Heart right ventricle (tissue), 16 donors: ENCODE measurements at regions of chr20 and their contacts with region 1.

Region 1: DNA sequence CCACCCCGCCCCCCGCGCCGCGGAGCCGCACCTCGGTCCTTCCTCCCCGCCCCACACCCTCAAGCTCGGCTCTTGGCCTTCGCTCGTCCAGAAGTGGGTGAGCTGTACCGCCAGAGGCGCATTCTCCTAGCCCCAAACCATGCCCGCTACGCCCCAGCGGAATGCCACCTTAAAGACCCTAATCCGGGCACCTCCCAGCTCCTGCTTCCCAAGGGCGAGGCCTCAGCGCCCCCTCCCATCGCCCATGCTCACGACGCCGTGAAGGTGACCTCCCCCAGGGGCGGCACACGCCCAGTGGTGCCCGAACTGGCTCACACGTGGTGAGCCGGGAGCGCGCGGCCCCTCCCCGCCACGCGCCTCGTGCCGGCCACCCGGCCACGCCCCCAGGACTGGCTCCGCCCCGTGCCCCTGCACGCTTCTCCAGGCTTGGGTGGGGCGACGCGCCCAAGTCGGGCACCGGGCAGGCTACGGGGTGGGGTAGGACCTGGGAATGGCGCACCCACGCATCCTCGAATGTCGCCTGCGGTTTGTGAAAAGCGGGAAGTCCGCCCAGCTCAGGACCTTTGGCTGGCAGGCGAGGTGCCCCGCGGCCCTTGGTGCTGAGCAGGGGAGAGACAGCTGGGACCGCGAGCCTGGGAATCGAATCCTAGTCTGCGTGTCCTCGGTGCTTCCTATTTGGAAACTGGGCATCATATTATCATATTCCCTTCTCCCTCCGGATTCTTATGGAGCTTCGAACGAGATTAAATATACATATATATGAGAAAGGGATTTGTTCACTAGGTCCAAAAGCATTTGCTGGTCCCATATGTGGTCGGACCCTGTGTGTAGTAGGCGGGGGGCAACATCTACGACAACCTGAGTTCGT is 941 bp upstream of the SOX12 start:
- DNase-seq: peak; percentile 88 to 92
- ATAC-seq: peak; percentile 65 to 87 (median 78)
- H3K4me3 ChIP-seq: peak overlapping the region; percentile 33 to 83 (median 73)
- H3K27ac ChIP-seq: peak overlapping the region; percentile 85 to 98 (median 95)
- H3K4me1 ChIP-seq: peaks cover 5 to 44% (median 24%) of the 10 kb centered on the region in 9 donors
- H3K27me3 ChIP-seq: peaks cover 0 to 9% (median 0%) of the 10 kb centered on the region in 7 donors
- CTCF ChIP-seq: peak in 5 of 9 donors; percentile 24 to 45 (median 40)

Region 2: DNA sequence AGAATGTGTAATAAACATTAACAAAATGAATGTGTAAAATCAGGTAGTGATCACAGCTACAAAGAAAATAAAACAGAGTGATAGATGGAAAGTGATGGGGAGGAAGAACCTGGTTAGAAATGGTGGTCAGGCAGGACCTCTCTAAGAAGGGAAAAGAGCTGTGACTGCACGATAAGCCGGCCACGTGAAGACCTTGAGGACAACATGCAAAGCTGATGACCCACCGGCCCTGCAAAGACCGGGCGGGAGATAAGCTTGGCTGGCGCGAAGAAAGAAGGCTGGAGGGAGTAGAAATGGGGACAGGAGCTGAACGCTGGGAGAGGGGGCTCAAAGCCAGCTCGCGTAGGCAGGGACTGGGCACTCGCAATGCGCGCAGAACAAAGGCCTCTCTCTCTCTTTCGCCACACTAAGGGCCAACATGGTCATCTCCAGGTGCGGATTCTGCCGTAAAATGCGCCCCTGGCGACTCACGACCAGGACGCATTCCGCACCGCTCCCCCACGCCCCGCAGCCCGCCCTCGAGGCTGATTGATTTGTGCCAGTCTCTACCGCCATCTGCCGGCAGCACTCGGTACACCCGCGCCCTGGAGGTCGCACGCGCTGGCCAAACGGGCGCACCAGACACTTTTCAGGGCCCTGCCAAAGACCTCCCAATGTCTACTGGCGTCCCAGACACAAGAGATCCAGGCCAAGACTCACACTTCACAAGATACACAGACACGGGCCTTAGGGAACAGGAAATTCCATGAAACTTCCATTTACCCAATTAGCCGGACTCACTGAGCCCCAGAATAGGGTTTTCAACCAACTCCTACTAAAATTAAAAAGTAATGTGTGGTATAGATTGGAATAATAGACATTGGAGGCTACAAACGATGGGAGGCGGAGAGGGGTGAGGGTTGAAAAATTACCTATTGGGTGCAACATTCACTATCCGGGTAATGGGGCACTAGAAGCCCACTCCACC is 57.5 kb before region 1 on chr20:
- intact Hi-C with region 1: loop called in 2 of 10 experiments (anchors 5 to 10 kb)
- DNase-seq: peak; percentile 85 to 87
- ATAC-seq: peak; percentile 87 to 94 (median 94)
- H3K4me3 ChIP-seq: peak overlapping the region; percentile 15 to 62 (median 57)
- H3K27ac ChIP-seq: no peak overlapping the region
- H3K4me1 ChIP-seq: peaks cover 0 to 13% (median 0%) of the 10 kb centered on the region in 9 donors
- H3K27me3 ChIP-seq: peaks cover 0 to 3% (median 0%) of the 10 kb centered on the region in 7 donors
- CTCF ChIP-seq: peak; percentile 95 to 99 (median 97)

Region 3: GRCh38 chr20:278607-279571 is 45.5 kb before region 1 on chr20:
- intact Hi-C with region 1: loop called in 3 of 10 experiments (anchors 5 to 10 kb)
- DNase-seq: peak; percentile 33 to 47
- ATAC-seq: peak; percentile 21 to 64 (median 50)
- H3K4me3 ChIP-seq: peak overlapping the region in 8 of 10 donors; percentile 16 to 45 (median 34)
- H3K27ac ChIP-seq: peak overlapping the region in 3 of 10 donors; percentile 31 to 40 (median 39)
- H3K4me1 ChIP-seq: no peaks in the 10 kb centered on the region
- H3K27me3 ChIP-seq: no peaks in the 10 kb centered on the region
- CTCF ChIP-seq: peak in 4 of 9 donors; percentile 14 to 34 (median 26)

Region 4: DNA sequence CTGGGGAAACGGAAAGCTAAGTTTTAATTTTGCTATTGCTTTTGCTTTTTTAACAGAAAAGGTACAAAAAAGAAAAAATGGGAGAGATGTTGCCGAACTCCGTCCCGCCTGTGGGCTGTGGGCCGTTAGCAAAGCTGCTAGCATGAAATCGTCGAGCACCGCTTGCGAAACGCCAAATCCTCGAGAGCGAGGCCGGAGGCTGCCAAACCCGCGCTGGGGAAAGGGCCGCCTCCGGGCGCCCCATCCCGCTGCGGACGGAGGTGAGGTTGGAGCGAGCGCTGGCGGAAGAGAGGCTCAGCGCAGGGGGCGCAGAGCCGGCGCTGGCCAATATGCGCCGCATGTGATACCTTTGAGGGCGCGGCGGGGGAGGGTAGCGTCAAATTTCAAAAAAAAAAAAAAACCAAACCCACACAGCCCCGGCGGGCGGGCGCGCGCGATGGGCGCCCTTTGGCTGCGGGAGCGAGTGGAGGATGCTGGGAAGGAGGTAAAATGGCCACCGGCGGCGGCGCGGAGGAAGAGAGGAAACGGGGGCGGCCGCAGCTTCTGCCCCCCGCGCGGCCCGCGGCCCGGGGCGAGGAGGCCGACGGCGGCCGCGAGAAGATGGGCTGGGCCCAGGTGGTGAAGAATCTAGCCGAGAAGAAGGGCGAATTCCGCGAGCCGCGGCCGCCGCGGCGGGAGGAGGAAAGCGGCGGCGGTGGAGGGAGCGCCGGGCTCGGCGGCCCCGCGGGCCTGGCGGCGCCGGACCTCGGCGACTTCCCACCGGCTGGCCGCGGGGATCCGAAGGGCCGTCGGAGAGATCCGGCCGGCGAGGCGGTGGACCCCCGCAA is 27.1 kb before region 1 on chr20 and contains the start of gene ZCCHC3:
- intact Hi-C with region 1: loop called in 3 of 10 experiments (anchors 1 to 2 kb)
- DNase-seq: peak; percentile 83 to 87
- ATAC-seq: peak; percentile 86 to 94 (median 92)
- H3K4me3 ChIP-seq: peak within 1 kb of the TSS; percentile 70 to 96 (median 92)
- H3K27ac ChIP-seq: peak within 1 kb of the TSS; percentile 97 to 100 (median 99)
- H3K4me1 ChIP-seq: peaks cover 4 to 52% (median 46%) of the 10 kb centered on the region in 9 donors
- H3K27me3 ChIP-seq: no peaks in the 10 kb centered on the region
- CTCF ChIP-seq: peak in 3 of 9 donors; percentile 34 to 46 (median 42)
- total RNA-seq, gene ZCCHC3: 8.2 to 12.8 (median 10.7) TPM

Region 5: GRCh38 chr20:309841-310644 is 14.4 kb before region 1 on chr20:
- intact Hi-C with region 1: loop called in 1 of 10 experiments (anchors 2 kb)
- DNase-seq: peak; percentile 96 to 99
- ATAC-seq: peak; percentile 99 to 100 (median 100)
- H3K4me3 ChIP-seq: peak overlapping the region; percentile 34 to 68 (median 60)
- H3K27ac ChIP-seq: peak overlapping the region; percentile 37 to 90 (median 83)
- H3K4me1 ChIP-seq: peaks cover 0 to 22% (median 19%) of the 10 kb centered on the region in 9 donors
- H3K27me3 ChIP-seq: no peaks in the 10 kb centered on the region
- CTCF ChIP-seq: no peak